ENCODE measurements at regions of chr17 and their contacts with region 1.

Region 1: GRCh38 chr17:79065105-79065670 is 9.4 kb upstream of the ENGASE start:
- H3K4me3 Mint-ChIP-seq: no peak overlapping the region
- H3K27ac Mint-ChIP-seq: no peak overlapping the region
- H3K4me1 Mint-ChIP-seq: peaks cover 5% of the 10 kb centered on the region
- H3K27me3 Mint-ChIP-seq: peaks cover 6% of the 10 kb centered on the region

Region 2: DNA sequence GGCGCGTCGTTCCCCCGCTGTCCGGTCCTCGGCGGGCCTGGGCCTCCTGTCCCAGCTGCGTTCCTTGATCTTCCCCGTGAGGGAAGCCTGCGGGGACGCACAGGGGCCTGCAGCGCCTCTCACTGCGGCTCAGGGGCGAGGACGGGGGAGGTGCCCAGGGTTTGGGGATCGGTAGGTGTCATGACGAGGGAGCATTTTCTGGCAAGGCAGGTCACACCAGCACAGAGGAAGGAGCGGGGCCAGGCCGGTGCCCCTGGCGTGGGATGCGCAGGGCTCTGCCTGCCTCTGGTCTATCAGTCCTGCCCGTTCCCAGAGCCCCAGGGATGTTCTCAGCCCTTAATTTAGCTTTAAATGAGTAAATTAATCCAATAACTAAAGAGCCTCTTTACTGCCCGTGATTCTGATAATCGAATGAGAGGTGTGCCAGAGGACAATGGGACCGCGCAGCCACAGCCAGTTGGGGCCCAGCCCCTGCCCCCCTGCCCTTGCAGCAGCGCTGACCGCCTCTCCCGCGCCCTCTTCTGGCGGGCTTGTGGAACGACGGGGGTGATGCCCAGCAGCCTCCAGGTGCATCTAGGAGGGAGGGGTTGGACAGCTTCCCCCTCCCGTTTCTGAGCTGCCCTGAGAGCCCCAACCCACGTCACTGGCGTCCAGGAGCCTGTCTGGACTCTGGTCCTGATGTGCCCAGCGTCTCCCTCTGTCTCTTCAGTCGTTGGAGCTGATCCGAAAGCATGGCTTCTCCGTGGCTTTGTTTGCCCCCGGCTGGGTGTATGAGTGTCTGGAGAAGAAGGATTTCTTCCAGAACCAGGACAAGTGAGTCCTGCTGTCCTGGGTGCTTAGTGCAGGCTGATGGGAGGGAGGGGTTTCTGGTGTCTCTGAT is 17.4 kb after region 1 on chr17:
- intact Hi-C with region 1: loop called (anchors 1 kb)
- H3K4me3 Mint-ChIP-seq: no peak overlapping the region
- H3K27ac Mint-ChIP-seq: no peak overlapping the region
- H3K4me1 Mint-ChIP-seq: no peaks in the 10 kb centered on the region
- H3K27me3 Mint-ChIP-seq: no peaks in the 10 kb centered on the region

Region 3: DNA sequence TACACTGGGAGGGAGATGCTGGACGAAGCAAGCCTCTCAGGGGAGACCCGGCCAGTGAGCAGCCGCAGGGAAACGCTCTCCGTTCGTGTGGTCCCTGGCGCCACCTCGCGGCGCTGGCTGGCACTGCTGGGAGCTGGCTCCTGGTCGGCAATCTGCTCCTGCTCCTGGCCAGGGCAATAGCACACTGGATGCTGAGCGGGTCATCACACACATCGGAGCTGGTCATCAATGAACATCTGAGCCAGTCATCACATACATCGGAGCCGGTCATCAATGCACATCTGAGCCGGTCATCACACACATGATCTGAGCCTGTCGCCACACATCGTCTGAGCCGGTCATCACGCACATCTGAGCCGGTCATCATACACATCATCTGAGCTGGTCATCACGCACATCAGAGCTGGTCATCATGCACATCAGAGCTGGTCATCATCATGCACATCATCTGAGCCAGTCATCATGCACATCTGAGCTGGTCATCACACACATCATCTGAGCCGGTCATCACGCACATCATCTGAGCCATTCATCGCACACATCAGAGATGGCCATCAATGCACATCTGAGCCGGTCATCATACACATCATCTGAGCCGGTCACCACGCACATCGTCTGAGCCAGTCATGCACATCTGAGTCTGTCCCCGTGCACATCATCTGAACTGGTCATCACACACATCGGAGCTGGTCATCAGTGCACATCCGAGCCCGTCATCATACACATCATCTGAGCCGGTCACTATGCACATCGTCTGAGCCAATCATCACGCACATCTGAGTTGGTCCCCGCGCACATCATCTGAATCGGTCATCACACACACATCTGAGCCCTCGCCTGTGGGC is 328.4 kb after region 1 on chr17:
- intact Hi-C with region 1: loop called (anchors 5 kb)
- H3K4me3 Mint-ChIP-seq: no peak overlapping the region
- H3K27ac Mint-ChIP-seq: no peak overlapping the region
- H3K4me1 Mint-ChIP-seq: no peaks in the 10 kb centered on the region
- H3K27me3 Mint-ChIP-seq: peaks cover 61% of the 10 kb centered on the region

Measured in dendritic cell treated with granulocyte-macrophage colony-stimulating factor and Interleukin-4, amounts not matched to agents 40 ng/mL and 50 ng/mL, for 4 days (primary cell).